GM10248 (cell line): ENCODE measurements at regions of chr14 and their contacts with region 1.

Region 1: DNA sequence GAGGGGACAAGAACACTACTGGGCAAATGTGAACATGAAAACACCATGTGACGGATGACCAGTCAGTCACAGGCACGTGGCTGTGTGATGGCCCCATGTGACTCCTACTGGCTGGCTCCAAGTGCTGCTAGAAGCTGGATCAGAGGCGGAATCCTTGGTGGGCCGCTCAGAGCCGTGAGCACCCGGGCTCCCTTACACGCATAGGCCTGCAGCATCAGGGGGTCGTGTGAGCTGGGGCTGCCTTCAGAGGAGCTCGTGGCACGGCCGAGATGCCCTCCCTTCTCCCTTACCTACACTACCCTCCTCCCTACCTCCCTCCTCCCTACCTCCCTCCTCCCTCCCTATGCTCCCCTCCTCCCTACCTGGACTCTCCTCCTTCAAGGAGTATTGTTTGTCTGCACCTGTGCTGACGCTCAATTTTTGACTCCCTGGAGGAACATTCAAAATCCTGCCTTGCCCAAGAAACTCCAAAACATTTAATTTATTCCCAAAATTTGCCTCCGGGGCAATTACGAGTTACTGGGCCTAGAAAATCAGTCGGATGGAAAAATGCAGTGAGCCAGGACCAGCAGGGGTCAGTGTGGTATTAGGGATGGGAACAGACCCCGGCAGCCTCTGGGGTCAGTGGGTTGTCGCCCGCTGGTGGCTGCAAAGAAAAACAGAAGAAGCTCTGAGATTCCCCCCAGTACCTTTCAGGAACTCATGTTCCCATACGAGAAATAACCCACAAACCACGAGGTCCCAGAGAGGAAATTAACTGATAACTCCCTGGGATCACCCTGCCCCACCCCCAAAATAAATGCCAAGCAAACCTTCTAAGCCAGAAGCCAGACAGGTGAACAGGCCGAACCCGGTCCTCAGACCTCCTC is 61.2 kb downstream of the C14orf132 start:
- DNase-seq: peak; percentile 79
- CTCF ChIP-seq: peak; percentile 78

Region 2: GRCh38 chr14:95981965-95982719 is 118.3 kb before region 1 on chr14:
- CTCF ChIA-PET with region 1: no interaction called
- POLR2A ChIA-PET with region 1: no interaction called
- DNase-seq: no peak
- CTCF ChIP-seq: no peak

Region 3: GRCh38 chr14:96038920-96039632 is 61.3 kb before region 1 on chr14 and contains the start of gene C14orf132:
- CTCF ChIA-PET with region 1: no interaction called
- POLR2A ChIA-PET with region 1: no interaction called
- DNase-seq: peak; percentile 76
- CTCF ChIP-seq: no peak

Region 4: GRCh38 chr14:96119947-96120346 is 19.6 kb after region 1 on chr14:
- CTCF ChIA-PET with region 1: interaction called, 12 read pairs
- POLR2A ChIA-PET with region 1: no interaction called
- DNase-seq: no peak
- CTCF ChIP-seq: no peak

Region 5: DNA sequence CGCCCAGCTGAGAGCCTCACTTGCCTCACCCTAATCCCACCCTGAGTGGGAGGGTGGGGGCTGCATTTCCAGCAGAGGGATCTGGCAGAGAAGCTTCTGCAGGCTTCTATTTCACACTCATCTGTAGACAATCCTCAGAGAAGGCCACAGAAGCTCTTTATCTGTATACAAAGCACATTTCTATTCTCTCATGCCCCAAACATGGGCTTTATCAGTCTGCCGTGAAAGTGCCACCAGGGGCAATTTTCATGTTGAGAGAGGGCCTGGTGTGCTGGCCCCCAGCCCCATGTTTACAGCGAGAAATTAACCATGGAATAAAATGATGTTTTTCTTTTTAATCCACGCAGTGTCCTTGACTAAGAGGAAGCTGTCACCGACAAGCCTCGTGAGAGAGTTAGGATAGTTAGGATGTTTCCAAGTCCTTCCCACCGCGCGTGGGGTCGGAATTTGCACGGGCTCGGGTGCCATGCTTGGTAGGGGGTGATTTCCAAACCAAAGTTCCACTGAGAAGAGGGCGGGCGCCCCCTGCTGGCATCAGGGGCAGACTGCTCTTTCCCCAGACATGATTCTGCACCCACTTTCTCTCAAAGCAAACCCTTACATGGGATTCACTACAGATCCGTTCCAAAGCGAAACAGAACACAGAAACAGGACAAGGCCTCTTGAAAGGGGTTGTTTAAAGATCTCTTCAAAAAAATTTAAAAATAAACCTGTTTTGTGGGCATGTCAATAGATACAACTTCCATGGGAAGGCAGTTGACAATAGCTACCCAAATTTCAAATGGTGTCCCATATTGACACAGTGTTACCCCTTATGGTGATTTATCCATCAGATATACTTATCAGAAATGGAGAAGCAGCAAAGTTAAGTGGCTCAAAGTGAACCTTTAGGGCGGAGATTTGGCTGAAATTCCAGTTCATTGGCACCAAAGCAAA is 175.1 kb after region 1 on chr14:
- CTCF ChIA-PET with region 1: interaction called, 143 read pairs
- POLR2A ChIA-PET with region 1: no interaction called
- DNase-seq: peak; percentile 82
- CTCF ChIP-seq: peak; percentile 81